Activated CD4-positive, alpha-beta T cell treated with anti-CD3 and anti-CD28 coated beads for 36 hours (primary cell): ENCODE measurements at regions of chr14 and their contacts with region 1.

Region 1: GRCh38 chr14:34059855-34060638 is 109.2 kb upstream of the EGLN3 start:
- DNase-seq: peak; percentile 83
- ATAC-seq: peak; percentile 94
- H3K4me3 Mint-ChIP-seq: peak overlapping the region; percentile 76
- H3K27ac Mint-ChIP-seq: peak overlapping the region; percentile 89
- H3K4me1 Mint-ChIP-seq: peaks cover 12% of the 10 kb centered on the region
- H3K27me3 Mint-ChIP-seq: peaks cover 19% of the 10 kb centered on the region

Region 2: DNA sequence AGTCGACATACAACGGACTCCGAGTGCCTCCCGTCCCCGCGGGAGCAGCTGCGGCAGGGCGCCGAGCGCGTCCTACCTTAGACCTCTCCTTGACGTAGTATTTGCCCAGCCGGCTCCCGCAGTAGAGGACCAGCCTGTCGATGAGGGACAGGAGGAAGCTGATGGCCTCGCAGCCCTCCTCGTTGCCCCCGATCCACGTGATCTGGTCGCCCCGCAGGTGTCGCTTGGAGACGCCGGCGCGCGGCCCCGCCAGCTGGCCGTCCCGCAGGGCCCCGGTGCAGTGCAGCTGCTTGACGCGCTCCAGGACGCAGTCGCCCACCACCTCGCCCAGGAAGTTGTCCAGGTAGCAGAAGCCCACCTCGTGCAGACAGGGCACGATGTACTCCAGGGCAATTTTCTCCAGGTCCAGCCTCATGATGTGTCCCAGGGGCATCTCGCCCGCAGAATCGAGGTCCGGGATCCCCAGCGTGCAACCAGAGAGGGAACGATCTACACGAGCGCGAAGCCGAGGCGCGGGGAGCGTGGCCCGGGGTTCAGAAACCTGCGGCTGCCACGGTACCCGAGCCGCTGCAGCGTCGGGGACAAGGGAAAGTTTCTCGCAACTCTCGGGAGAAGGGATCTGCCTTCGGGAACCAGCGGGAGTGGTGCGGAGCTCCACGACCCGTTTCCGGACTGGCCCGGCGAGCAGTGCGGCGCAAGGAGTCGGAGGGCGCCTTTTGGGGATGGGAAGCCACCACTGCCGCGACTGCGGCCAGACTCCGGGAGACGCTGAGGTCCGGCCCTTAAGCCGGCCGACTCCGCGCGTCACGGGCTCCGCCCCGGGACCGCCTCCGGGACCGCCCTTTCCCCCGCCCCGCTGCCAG is 109.5 kb before region 1 on chr14 and contains the start of gene EGLN3:
- CTCF ChIA-PET with region 1: no interaction called
- POLR2A ChIA-PET with region 1: no interaction called
- intact Hi-C with region 1: loop called in 1 of 2 experiments (anchors 5 kb)
- DNase-seq: peak; percentile 78
- ATAC-seq: peak; percentile 93
- H3K4me3 Mint-ChIP-seq: peak within 1 kb of the TSS; percentile 77
- H3K27ac Mint-ChIP-seq: peak within 1 kb of the TSS; percentile 55
- H3K4me1 Mint-ChIP-seq: peaks cover 22% of the 10 kb centered on the region
- H3K27me3 Mint-ChIP-seq: peaks cover 45% of the 10 kb centered on the region
- total RNA-seq, gene EGLN3: 3.8 to 3.9 TPM

Region 3: DNA sequence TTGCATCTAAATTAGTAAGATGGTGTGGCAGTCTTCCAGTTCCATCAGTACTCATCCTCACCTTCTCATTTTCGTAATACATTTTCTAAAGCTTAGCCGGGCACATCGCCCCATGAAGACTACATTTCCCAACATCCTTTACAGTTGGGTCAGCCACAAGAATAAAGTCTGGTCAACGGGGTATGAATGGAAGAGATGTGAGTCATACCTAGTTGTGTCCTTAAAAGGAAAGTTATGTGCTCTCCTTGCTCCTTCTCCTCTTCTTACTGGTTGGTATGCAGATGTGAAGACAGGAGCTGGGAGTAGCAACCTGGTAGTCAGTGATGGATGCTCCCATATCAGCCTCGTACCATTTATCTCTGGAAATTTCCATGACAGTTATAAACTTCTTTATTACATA is 73.2 kb before region 1 on chr14:
- CTCF ChIA-PET with region 1: no interaction called
- POLR2A ChIA-PET with region 1: no interaction called
- intact Hi-C with region 1: no loop called
- DNase-seq: no peak
- ATAC-seq: peak; percentile 30
- H3K4me3 Mint-ChIP-seq: no peak overlapping the region
- H3K27ac Mint-ChIP-seq: no peak overlapping the region
- H3K4me1 Mint-ChIP-seq: peaks cover 9% of the 10 kb centered on the region
- H3K27me3 Mint-ChIP-seq: no peaks in the 10 kb centered on the region

Region 4: DNA sequence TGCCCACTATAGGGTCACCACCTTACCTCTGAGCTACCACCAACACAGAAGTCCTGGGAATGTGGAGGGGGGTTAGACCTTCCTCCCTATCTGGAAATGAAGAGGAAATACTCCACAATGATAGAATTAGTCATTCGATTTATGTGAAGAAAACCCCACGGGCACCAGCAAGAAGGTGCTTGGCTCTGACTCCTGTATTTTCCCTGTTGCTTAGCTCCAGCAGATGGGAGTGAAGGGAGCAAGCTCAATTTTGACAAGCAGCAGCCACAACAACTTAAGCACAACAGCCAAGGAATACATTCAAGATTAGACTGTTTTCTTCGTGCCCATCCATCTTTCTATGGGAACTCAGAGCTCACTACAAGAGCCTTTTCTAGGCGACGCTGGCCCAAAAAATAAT is 210.3 kb after region 1 on chr14:
- CTCF ChIA-PET with region 1: no interaction called
- POLR2A ChIA-PET with region 1: no interaction called
- intact Hi-C with region 1: no loop called
- DNase-seq: no peak
- ATAC-seq: no peak
- H3K4me3 Mint-ChIP-seq: no peak overlapping the region
- H3K27ac Mint-ChIP-seq: no peak overlapping the region
- H3K4me1 Mint-ChIP-seq: no peaks in the 10 kb centered on the region
- H3K27me3 Mint-ChIP-seq: peaks cover 5% of the 10 kb centered on the region